Heart left ventricle (tissue), 16 donors: ENCODE measurements at regions of chr3 and their contacts with region 1.

Region 1: GRCh38 chr3:136861890-136862616 is at the start of gene NCK1:
- DNase-seq: peak; percentile 99
- ATAC-seq: peak; percentile 99 to 100 (median 99)
- H3K4me3 ChIP-seq: peak within 1 kb of the TSS; percentile 61 to 95 (median 83)
- H3K27ac ChIP-seq: peak within 1 kb of the TSS; percentile 72 to 95 (median 90)
- H3K4me1 ChIP-seq: peaks cover 0 to 51% (median 23%) of the 10 kb centered on the region in 12 donors
- H3K27me3 ChIP-seq: no peaks in the 10 kb centered on the region
- CTCF ChIP-seq: peak in 5 of 12 donors; percentile 6 to 26 (median 17)
- POLR2A ChIP-seq: peak; percentile 19 to 92
- total RNA-seq, gene NCK1: 18.7 to 36.0 (median 23.4) TPM

Region 2: GRCh38 chr3:136929984-136930670 is 68.1 kb after region 1 on chr3:
- intact Hi-C with region 1: loop called in 4 of 10 experiments (anchors 5 to 10 kb)
- DNase-seq: peak in 4 of 5 donors; percentile 47 to 68 (median 63)
- ATAC-seq: peak; percentile 67 to 85 (median 78)
- H3K4me3 ChIP-seq: peak overlapping the region in 11 of 12 donors; percentile 8 to 57 (median 40)
- H3K27ac ChIP-seq: peak overlapping the region in 11 of 12 donors; percentile 12 to 73 (median 54)
- H3K4me1 ChIP-seq: peaks cover 0 to 58% (median 18%) of the 10 kb centered on the region in 12 donors
- H3K27me3 ChIP-seq: no peaks in the 10 kb centered on the region
- CTCF ChIP-seq: no peak
- POLR2A ChIP-seq: no peak

Region 3: DNA sequence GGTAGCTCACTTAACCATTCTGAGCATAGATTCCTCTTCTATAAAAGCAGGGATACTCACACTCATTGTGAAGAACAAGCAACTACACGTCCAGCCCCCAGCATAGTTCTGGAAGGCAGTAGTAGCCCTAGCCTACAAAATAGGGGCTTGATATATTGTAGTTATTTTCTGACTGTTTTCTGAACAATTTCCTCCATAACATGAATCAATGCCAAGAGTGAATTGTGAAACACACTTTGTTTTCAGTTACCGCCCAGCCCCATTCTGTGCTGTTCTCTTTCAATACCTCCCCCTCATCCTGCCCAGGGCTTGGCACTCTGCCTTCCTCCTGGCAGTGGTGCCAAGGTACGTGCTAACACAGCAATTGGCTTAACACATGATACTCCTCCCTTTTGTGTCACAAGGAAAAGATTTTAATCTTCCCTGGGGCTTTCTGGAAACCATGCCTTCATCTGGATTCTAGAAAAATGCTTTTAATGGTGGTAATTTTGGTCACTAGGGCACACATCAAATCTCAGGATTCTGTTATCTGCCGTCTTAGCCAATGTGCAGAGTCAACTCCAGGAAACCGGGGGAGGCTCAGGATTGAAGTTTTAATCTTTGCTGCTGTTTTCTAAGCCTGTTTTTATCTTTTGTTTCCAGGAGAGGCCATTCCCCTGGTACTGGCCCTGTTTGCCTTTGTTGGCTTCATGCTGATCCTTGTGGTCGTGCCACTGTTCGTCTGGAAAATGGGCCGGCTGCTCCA is 132.9 kb after region 1 on chr3:
- intact Hi-C with region 1: loop called in 2 of 10 experiments (anchors 10 kb)
- DNase-seq: peak; percentile 76 to 85 (median 82)
- ATAC-seq: peak; percentile 89 to 97 (median 92)
- H3K4me3 ChIP-seq: no peak overlapping the region
- H3K27ac ChIP-seq: peak overlapping the region; percentile 54 to 89 (median 78)
- H3K4me1 ChIP-seq: peaks cover 0 to 27% (median 17%) of the 10 kb centered on the region in 12 donors
- H3K27me3 ChIP-seq: no peaks in the 10 kb centered on the region
- CTCF ChIP-seq: no peak
- POLR2A ChIP-seq: no peak

Region 4: GRCh38 chr3:137008976-137009375 is 146.9 kb after region 1 on chr3:
- intact Hi-C with region 1: loop called in 4 of 10 experiments (anchors 1 to 10 kb)
- DNase-seq: no peak
- ATAC-seq: no peak
- H3K4me3 ChIP-seq: no peak overlapping the region
- H3K27ac ChIP-seq: no peak overlapping the region
- H3K4me1 ChIP-seq: peaks cover 0 to 11% (median 3%) of the 10 kb centered on the region in 12 donors
- H3K27me3 ChIP-seq: no peaks in the 10 kb centered on the region
- CTCF ChIP-seq: no peak
- POLR2A ChIP-seq: no peak